ENCODE measurements at regions of chr20 and their contacts with region 1.

Region 1: DNA sequence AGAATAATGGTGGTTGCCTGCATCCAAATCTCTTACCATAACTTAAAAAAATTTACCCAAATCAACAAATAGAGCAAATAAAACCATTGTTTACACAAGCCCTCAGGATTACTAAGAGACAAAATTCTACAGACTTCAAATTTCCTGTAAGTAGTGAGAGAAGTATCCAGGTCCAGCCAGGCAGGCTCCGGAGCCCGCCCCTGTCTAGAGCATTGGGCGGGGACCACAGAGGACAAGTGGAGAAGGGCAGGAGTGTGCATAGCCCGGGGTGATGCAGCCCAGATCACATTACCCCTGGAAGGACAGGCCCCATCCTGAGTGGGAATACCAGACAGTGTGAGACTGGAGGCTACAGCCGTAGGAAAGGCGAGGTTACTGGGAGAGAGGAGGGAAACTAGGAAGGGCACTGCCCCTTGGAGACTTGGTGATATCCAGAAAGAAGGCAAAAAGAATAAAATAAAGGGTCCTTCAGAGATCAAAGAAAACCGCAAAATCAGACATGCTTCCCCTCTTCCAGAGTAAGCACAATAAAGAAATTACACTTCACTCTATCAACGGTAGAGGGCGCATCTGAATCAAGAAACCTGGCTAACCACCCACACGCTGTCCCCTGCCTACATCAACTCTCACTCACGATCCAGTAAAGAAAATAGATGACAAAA is 26.6 kb downstream of the RIN2 start:
- DNase-seq: no peak
- H3K4me3 ChIP-seq: no peak overlapping the region
- CTCF ChIP-seq: peak; percentile 57

Region 2: GRCh38 chr20:19692685-19693119 is 91.9 kb before region 1 on chr20:
- CTCF ChIA-PET with region 1: interaction called, 13 read pairs
- POLR2A ChIA-PET with region 1: no interaction called
- DNase-seq: no peak
- H3K4me3 ChIP-seq: no peak overlapping the region
- CTCF ChIP-seq: peak; percentile 80

Region 3: DNA sequence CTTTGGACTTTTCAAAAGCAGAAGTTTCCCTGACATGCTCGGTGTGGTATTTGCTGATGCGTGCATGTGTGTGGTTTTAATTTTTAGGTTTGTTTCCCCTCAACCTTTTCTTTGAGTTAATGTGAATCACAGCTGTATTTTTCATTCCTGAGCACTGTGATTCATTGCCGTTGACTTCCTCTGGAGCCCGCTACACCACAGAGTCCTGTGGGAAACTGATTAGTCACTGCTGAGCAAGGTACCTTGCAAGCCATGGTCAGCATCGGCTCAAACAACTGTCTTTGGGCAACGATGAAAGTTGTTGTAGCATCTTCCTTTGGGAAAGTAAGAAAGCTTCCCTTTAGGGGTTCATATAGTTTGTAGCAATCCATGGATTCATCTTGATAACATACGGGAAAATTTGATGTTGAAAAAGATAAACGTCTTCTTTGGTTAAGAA is 30.9 kb after region 1 on chr20:
- CTCF ChIA-PET with region 1: interaction called, 14 read pairs
- POLR2A ChIA-PET with region 1: interaction called, 11 read pairs
- DNase-seq: peak; percentile 96
- H3K4me3 ChIP-seq: no peak overlapping the region
- CTCF ChIP-seq: no peak

Region 4: GRCh38 chr20:19974626-19975435 is 190.2 kb after region 1 on chr20:
- CTCF ChIA-PET with region 1: interaction called, 56 read pairs
- POLR2A ChIA-PET with region 1: interaction called, 53 read pairs
- DNase-seq: peak; percentile 96
- H3K4me3 ChIP-seq: peak overlapping the region; percentile 90
- CTCF ChIP-seq: no peak

Region 5: GRCh38 chr20:20003031-20003954 is 218.7 kb after region 1 on chr20:
- CTCF ChIA-PET with region 1: interaction called, 38 read pairs
- POLR2A ChIA-PET with region 1: no interaction called
- DNase-seq: no peak
- H3K4me3 ChIP-seq: no peak overlapping the region
- CTCF ChIP-seq: no peak

Measured in AG04449 (cell line).